ENCODE measurements at regions of chr20 and their contacts with region 1.

Region 1: DNA sequence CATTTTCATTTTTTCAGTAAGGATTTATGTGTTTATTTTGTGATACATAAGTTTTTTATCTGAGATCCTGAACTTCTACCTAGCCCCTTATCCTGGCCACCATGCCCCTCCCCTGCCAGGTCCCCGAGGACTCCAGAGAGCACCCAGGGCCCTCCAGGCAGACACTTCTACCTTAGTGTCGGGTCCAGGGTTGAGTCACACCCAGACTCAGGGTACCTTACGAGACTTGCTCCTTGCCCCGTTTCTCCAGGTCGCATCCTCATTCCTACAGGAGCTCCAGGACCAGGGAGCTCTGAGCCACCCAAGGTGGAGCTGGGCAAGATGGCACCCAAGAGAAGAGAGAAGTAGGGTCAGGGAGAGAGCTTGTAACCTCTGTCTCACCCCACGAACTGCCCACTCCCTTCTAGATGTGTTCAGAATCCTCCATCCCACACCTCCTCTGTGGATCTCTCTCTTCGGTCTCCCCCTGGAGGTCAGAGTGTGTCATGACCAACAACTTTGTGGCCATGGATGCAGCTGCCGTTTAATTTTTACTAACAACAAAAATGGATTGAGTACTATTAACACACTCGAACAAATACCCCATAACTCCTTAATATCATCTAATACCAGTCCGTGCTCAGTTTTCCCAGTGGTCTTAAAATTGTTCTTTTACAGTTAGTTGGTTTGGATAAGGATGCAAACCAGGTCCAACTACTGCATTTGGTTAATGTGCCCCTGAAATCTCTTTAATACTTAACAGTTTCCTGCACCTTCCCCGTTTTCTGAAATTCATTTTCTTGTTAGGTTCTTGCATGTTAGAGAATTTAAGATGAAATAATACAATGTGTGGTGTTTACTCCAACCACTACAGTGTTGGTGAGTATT is 130.6 kb upstream of the INSM1 start:
- DNase-seq: no peak
- ATAC-seq: peak; percentile 91
- H3K4me3 ChIP-seq: no peak overlapping the region
- H3K27ac ChIP-seq: no peak overlapping the region
- H3K4me1 ChIP-seq: no peaks in the 10 kb centered on the region
- H3K27me3 ChIP-seq: no peaks in the 10 kb centered on the region; a peak in 1 of 4 replicates
- CTCF ChIP-seq: peak; percentile 74 to 78 (median 76)
- EP300 ChIP-seq: no peak
- POLR2A ChIP-seq: no peak
- RAD21 ChIP-seq: peak; percentile 74

Region 2: DNA sequence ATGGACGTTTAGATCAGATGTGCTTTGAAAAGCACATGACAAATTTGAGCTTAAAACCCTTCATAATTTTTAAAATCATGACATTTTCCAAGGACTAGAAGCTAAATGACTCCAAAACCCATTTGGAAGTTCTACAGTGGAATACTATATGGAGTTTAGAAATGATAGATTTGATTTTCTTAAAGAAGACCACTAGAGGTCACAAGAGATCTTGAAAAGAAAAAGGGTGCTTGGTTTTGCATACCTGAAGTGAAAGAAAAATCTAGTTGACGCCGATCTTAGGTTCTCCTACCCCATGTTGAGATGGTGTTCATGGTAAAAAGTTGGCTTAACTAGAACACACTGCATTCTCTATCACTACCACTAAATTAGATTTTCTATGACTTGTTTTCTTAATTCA is 153.5 kb before region 1 on chr20:
- CTCF ChIA-PET with region 1: interaction called, 57 read pairs
- POLR2A ChIA-PET with region 1: no interaction called
- RAD21 ChIA-PET with region 1: interaction called, 18 read pairs
- SMC1A ChIA-PET with region 1: interaction called, 10 read pairs
- in situ Hi-C with region 1: no loop called
- intact Hi-C with region 1: loop called (anchors 1 kb)
- DNase-seq: peak; percentile 2
- ATAC-seq: peak; percentile 81
- H3K4me3 ChIP-seq: no peak overlapping the region
- H3K27ac ChIP-seq: no peak overlapping the region
- H3K4me1 ChIP-seq: no peaks in the 10 kb centered on the region
- H3K27me3 ChIP-seq: no peaks in the 10 kb centered on the region; a peak in 2 of 4 replicates
- CTCF ChIP-seq: peak; percentile 31 to 56 (median 43); a peak in 4 of 6 replicates
- EP300 ChIP-seq: no peak
- POLR2A ChIP-seq: no peak
- RAD21 ChIP-seq: peak; percentile 69

Region 3: GRCh38 chr20:20130399-20130798 is 106.9 kb before region 1 on chr20:
- CTCF ChIA-PET with region 1: interaction called, 16 read pairs
- POLR2A ChIA-PET with region 1: no interaction called
- RAD21 ChIA-PET with region 1: interaction called, 4 read pairs
- SMC1A ChIA-PET with region 1: no interaction called
- in situ Hi-C with region 1: no loop called
- intact Hi-C with region 1: no loop called
- DNase-seq: peak; percentile 1
- ATAC-seq: no peak
- H3K4me3 ChIP-seq: no peak overlapping the region
- H3K27ac ChIP-seq: no peak overlapping the region
- H3K4me1 ChIP-seq: no peaks in the 10 kb centered on the region
- H3K27me3 ChIP-seq: no peaks in the 10 kb centered on the region; a peak in 1 of 4 replicates
- CTCF ChIP-seq: peak; percentile 26 to 42 (median 40); a peak in 5 of 6 replicates
- EP300 ChIP-seq: no peak
- POLR2A ChIP-seq: no peak
- RAD21 ChIP-seq: peak; percentile 57

Region 4: GRCh38 chr20:20219016-20219415 is 18.3 kb before region 1 on chr20:
- CTCF ChIA-PET with region 1: interaction called, 14 read pairs
- POLR2A ChIA-PET with region 1: interaction called, 3 read pairs
- RAD21 ChIA-PET with region 1: no interaction called
- SMC1A ChIA-PET with region 1: interaction called, 5 read pairs
- in situ Hi-C with region 1: no loop called
- intact Hi-C with region 1: no loop called
- DNase-seq: no peak
- ATAC-seq: no peak
- H3K4me3 ChIP-seq: no peak overlapping the region
- H3K27ac ChIP-seq: no peak overlapping the region
- H3K4me1 ChIP-seq: no peaks in the 10 kb centered on the region
- H3K27me3 ChIP-seq: no peaks in the 10 kb centered on the region; a peak in 1 of 4 replicates
- CTCF ChIP-seq: no peak
- EP300 ChIP-seq: no peak
- POLR2A ChIP-seq: no peak
- RAD21 ChIP-seq: no peak

Region 5: GRCh38 chr20:20414640-20415220 is 177.4 kb after region 1 on chr20:
- CTCF ChIA-PET with region 1: no interaction called
- POLR2A ChIA-PET with region 1: no interaction called
- RAD21 ChIA-PET with region 1: no interaction called
- SMC1A ChIA-PET with region 1: no interaction called
- in situ Hi-C with region 1: no loop called
- intact Hi-C with region 1: no loop called
- DNase-seq: no peak
- ATAC-seq: no peak
- H3K4me3 ChIP-seq: no peak overlapping the region
- H3K27ac ChIP-seq: no peak overlapping the region
- H3K4me1 ChIP-seq: no peaks in the 10 kb centered on the region
- H3K27me3 ChIP-seq: no peaks in the 10 kb centered on the region
- CTCF ChIP-seq: no peak
- EP300 ChIP-seq: no peak
- POLR2A ChIP-seq: no peak
- RAD21 ChIP-seq: no peak

Region 6: GRCh38 chr20:20593447-20594170 is 356.3 kb after region 1 on chr20:
- CTCF ChIA-PET with region 1: interaction called, 12 read pairs
- POLR2A ChIA-PET with region 1: no interaction called
- RAD21 ChIA-PET with region 1: no interaction called
- SMC1A ChIA-PET with region 1: interaction called, 4 read pairs
- in situ Hi-C with region 1: no loop called
- intact Hi-C with region 1: no loop called
- DNase-seq: no peak
- ATAC-seq: peak; percentile 93
- H3K4me3 ChIP-seq: no peak overlapping the region
- H3K27ac ChIP-seq: no peak overlapping the region
- H3K4me1 ChIP-seq: no peaks in the 10 kb centered on the region
- H3K27me3 ChIP-seq: no peaks in the 10 kb centered on the region
- CTCF ChIP-seq: peak; percentile 47 to 63 (median 52); a peak in 5 of 6 replicates
- EP300 ChIP-seq: no peak
- POLR2A ChIP-seq: no peak
- RAD21 ChIP-seq: peak; percentile 43